Endothelial cell of umbilical vein (primary cell): ENCODE measurements at regions of chr9 and their contacts with region 1.

Region 1: GRCh38 chr9:73023025-73023541 is 70.2 kb upstream of the ALDH1A1 start:
- DNase-seq: peak; percentile 80
- H3K4me3 ChIP-seq: no peak overlapping the region
- H3K27ac ChIP-seq: peak overlapping the region; percentile 59
- H3K4me1 ChIP-seq: peaks cover 20% of the 10 kb centered on the region
- H3K27me3 ChIP-seq: no peaks in the 10 kb centered on the region
- CTCF ChIP-seq: peak; percentile 65 to 75
- POLR2A ChIP-seq: no peak

Region 2: DNA sequence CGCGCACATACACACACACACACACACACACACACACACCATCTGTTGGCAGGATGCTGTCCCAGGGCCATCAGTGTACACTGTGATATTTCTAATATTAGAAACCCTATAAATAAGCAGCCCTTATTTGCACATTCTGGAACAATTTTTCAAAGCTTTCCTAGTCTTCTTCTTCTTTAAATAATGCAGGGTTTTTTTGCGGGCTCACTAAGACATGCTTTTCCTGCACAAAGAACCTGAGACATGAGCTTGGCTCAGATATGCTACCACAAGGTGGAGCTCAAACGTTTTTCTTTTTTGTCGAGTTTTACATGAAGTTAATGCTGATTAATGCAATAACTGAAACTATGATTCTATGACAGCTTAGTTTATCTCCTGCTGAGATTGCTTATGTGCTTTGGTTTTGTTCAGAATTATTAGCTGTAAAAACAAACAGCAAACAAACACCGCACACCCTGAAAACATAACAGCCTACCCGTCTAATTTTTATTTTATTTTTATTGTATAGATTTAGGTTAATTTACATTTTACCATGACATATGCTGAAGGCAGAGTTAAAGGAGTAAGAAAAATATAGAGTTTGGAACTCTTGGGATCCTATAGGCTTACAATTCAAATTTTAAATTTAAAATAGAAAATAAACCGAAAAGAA is 166.0 kb before region 1 on chr9:
- CTCF ChIA-PET with region 1: interaction called, 74 read pairs
- POLR2A ChIA-PET with region 1: no interaction called
- dilution Hi-C with region 1: no loop called
- intact Hi-C with region 1: loop called (anchors 1 kb)
- DNase-seq: peak; percentile 74
- H3K4me3 ChIP-seq: no peak overlapping the region
- H3K27ac ChIP-seq: peak overlapping the region; percentile 35
- H3K4me1 ChIP-seq: peaks cover 16% of the 10 kb centered on the region
- H3K27me3 ChIP-seq: no peaks in the 10 kb centered on the region
- CTCF ChIP-seq: peak; percentile 60 to 63
- POLR2A ChIP-seq: no peak

Region 3: GRCh38 chr9:72907421-72907820 is 115.7 kb before region 1 on chr9:
- CTCF ChIA-PET with region 1: interaction called, 13 read pairs
- POLR2A ChIA-PET with region 1: no interaction called
- dilution Hi-C with region 1: no loop called
- intact Hi-C with region 1: no loop called
- DNase-seq: peak; percentile 74
- H3K4me3 ChIP-seq: no peak overlapping the region
- H3K27ac ChIP-seq: no peak overlapping the region
- H3K4me1 ChIP-seq: no peaks in the 10 kb centered on the region
- H3K27me3 ChIP-seq: no peaks in the 10 kb centered on the region
- CTCF ChIP-seq: no peak
- POLR2A ChIP-seq: no peak

Region 4: DNA sequence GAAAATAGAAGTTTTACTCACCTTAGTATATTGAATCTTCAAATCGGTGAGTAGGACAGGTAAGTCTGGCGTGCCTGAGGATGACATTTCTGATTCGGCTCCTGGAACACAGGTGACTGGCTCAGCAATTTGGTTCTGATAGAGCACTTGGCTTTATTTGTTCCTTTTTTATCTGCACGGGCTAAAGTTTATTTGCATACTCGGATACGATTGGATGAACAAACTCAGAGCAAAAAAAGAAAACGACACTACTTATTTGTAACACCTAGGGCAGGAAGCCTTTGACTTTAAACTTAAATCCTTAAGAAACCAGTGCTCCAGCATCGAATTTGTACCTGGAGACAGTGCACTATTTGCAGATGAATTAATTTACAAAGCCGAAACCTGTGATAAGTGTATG is 70.2 kb before region 1 on chr9 and contains the start of gene ALDH1A1:
- CTCF ChIA-PET with region 1: interaction called, 14 read pairs
- POLR2A ChIA-PET with region 1: no interaction called
- dilution Hi-C with region 1: no loop called
- intact Hi-C with region 1: loop called (anchors 1 kb)
- DNase-seq: peak; percentile 73
- H3K4me3 ChIP-seq: peak within 1 kb of the TSS; percentile 43 to 84 (median 54)
- H3K27ac ChIP-seq: peak within 1 kb of the TSS; percentile 65
- H3K4me1 ChIP-seq: peaks cover 7% of the 10 kb centered on the region
- H3K27me3 ChIP-seq: no peaks in the 10 kb centered on the region
- CTCF ChIP-seq: no peak
- POLR2A ChIP-seq: peak; percentile 55
- total RNA-seq, gene ALDH1A1: 220 and 287 TPM in 2 replicates

Region 5: GRCh38 chr9:72997387-72997995 is 25.6 kb before region 1 on chr9:
- CTCF ChIA-PET with region 1: interaction called, 11 read pairs
- POLR2A ChIA-PET with region 1: no interaction called
- dilution Hi-C with region 1: no loop called
- intact Hi-C with region 1: loop called (anchors 1 kb)
- DNase-seq: peak; percentile 89
- H3K4me3 ChIP-seq: peak overlapping the region in 2 of 3 experiments; percentile 17 to 57
- H3K27ac ChIP-seq: peak overlapping the region; percentile 100
- H3K4me1 ChIP-seq: peaks cover 38% of the 10 kb centered on the region
- H3K27me3 ChIP-seq: no peaks in the 10 kb centered on the region
- CTCF ChIP-seq: no peak
- POLR2A ChIP-seq: peak; percentile 71

Region 6: DNA sequence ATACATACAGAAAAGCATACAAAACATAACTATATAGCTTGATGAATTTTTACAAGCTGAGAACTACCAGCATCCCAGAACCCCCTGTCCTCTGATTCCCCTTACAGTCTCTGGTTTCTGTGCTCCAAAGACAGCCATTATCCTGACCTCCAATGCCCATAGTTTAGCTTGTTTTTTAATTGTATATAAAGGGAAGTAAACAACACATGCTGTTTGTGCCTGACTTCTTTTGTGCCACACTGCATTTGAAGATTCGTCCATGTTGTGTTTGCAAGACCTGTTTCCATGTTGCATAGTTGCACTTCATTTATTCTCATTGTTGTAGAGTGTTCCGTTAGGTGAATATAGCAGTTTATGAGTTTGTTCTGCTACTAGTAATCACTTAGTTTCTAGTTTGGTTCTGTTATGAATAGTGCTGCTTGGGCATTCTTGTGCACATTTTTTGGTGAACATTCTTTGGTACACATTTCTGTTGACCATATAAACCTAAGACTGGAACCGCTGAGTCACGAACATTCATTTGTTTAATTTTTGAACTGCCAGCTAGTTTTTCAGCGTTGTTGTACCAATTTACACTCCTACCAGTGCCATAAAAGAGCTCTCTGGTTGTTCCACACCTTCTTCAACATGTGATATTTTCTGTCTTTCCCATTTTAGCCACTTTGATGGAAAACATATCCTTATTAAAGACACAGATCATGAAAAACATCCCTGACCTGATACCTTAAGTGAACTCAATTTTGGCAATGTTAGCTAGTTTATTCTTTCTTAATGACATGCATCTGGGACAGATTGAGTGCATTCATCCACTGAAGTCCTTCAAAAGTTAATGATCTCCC is 50.5 kb after region 1 on chr9:
- CTCF ChIA-PET with region 1: interaction called, 4 read pairs
- POLR2A ChIA-PET with region 1: no interaction called
- dilution Hi-C with region 1: no loop called
- intact Hi-C with region 1: loop called (anchors 1 kb)
- DNase-seq: no peak
- H3K4me3 ChIP-seq: no peak overlapping the region
- H3K27ac ChIP-seq: peak overlapping the region; percentile 82
- H3K4me1 ChIP-seq: peaks cover 20% of the 10 kb centered on the region
- H3K27me3 ChIP-seq: no peaks in the 10 kb centered on the region
- CTCF ChIP-seq: no peak
- POLR2A ChIP-seq: no peak

Region 7: DNA sequence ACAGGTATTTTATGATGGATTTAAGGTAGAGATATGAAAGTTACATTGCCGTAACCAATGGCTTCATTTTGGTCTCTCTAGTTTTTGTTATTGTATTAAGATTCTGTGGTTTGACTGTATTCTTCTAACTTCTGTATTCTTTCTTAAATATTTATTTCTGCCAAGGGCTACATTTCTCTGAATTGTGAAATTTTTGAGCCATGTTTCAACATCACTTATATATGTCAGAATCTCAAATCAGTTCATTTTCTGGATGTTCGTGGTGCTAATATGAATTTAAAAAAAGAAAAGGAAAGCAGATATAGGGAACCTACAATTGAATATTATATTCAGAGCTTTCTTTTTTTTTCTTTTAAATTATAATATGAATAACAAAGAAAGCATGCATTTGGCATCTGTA is 271.3 kb after region 1 on chr9:
- CTCF ChIA-PET with region 1: no interaction called
- POLR2A ChIA-PET with region 1: no interaction called
- dilution Hi-C with region 1: no loop called
- intact Hi-C with region 1: no loop called
- DNase-seq: no peak
- H3K4me3 ChIP-seq: no peak overlapping the region
- H3K27ac ChIP-seq: no peak overlapping the region
- H3K4me1 ChIP-seq: no peaks in the 10 kb centered on the region
- H3K27me3 ChIP-seq: no peaks in the 10 kb centered on the region
- CTCF ChIP-seq: no peak
- POLR2A ChIP-seq: no peak